Head of caudate nucleus (tissue), 42 donors: ENCODE measurements at regions of chr3 and their contacts with region 1.

Region 1: DNA sequence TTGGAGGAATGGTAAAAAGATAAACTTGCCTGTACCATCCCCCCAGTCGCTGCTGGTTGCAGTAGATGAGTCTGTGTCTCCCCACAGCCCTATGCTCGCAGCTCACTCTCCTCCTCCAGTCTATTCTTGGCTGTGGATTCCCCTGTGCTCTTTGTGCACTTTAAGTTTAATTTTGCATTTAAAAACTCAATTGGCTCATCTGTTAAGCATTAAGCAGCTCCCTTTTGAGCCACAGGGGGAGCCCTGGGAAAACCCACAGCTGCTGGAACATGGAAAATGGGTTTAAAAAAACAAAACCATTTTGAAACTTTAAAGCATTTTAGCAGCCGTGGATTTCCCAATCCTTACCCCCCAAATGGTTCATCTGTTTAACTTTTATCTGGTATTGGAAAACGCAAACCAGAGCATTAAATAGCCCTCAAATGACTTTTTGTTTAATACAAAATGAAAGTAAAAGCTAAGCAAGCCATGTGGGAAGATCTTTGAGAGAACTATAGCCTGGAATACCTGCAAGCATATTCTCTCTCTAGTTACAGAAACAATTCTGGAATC is 536.9 kb downstream of the ZIC1 start:
- DNase-seq: peak in 38 of 42 donors; percentile 11 to 80 (median 40)

Region 2: GRCh38 chr3:148075763-148076716 is 130.0 kb after region 1 on chr3:
- intact Hi-C with region 1: loop called (anchors 10 kb)
- DNase-seq: peak in 30 of 42 donors; percentile 6 to 74 (median 44)

Region 3: DNA sequence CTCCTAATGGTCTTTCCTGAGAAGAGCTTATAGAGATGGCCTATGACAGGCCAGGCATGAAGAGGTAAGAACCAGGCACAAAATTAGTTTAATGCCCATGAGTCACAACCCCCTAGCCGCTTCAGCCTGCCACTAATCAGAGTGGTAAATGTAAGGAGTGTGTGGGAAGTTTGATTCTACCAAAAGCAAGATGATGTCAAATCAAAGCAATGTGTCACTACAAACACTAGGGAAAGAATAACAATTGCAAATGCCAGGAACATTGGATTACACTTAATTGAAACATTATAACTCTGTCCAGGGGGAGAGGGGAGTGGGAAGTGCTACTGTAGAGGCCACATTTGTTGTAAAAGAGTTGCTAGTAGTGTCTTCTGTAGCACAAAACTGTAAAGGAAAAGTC is 155.0 kb after region 1 on chr3:
- intact Hi-C with region 1: no loop called
- DNase-seq: no peak